ENCODE measurements at regions of chr6 and their contacts with region 1.

Region 1: DNA sequence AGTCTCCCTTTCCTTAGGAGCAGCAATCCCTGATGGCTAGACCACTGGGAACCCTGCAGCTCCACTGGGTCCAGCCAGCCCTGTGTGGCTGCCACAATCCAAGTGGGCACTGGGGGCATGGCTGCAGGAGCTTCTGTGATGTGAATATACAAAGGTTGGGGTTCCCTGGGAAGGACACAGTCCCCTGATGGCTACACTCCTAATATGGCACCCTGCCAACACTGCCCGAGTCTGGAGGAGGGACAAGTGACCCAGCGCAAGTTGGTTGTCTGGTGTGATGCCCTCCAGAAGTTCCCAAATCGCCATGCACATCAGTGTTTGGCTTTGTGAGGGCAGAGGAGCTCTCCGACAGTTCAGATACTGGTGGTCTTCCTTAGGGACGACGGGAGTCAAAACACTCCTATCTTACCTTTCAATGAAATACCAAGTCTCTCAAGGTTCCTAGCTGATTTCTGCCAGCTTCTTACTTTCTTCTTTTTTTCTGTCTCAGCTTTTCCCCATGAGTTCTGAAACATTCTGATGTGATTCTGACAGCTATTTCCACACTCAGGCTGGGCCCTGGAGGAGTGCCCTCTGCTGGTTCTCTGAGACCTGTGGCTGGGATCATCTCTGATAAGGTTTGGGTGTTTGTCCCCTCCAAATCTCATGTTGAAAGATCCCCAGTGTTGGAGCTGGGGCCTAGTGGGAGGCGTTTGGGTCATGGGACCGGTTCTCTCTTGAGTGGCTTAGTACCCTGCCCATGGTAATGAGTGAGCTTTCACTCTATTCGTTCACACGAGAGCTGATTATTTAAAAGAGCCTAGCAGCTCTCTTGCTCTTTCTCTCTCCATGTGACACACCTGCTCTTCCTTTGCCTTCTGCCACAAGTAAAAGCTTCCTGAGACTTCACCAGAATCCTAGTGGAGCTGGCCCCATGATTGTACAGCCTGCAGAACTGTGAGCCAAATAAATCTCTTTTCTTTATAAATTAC is 15.5 kb upstream of the ZFP57 start:
- DNase-seq: peak; percentile 47
- ATAC-seq: no peak
- H3K4me3 Mint-ChIP-seq: no peak overlapping the region
- H3K27ac Mint-ChIP-seq: no peak overlapping the region
- H3K4me1 Mint-ChIP-seq: no peaks in the 10 kb centered on the region
- H3K27me3 Mint-ChIP-seq: peaks cover 14% of the 10 kb centered on the region

Region 2: GRCh38 chr6:29559524-29560287 is 136.7 kb before region 1 on chr6 and contains the start of gene UBD:
- CTCF ChIA-PET with region 1: no interaction called
- DNase-seq: no peak
- ATAC-seq: no peak
- H3K4me3 Mint-ChIP-seq: no peak within 1 kb of the TSS
- H3K27ac Mint-ChIP-seq: no peak within 1 kb of the TSS
- H3K4me1 Mint-ChIP-seq: peaks cover 4% of the 10 kb centered on the region
- H3K27me3 Mint-ChIP-seq: peaks cover 60% of the 10 kb centered on the region
- total RNA-seq, gene UBD: 1.6 TPM in 1 of 2 experiments, not detected in the other

Region 3: DNA sequence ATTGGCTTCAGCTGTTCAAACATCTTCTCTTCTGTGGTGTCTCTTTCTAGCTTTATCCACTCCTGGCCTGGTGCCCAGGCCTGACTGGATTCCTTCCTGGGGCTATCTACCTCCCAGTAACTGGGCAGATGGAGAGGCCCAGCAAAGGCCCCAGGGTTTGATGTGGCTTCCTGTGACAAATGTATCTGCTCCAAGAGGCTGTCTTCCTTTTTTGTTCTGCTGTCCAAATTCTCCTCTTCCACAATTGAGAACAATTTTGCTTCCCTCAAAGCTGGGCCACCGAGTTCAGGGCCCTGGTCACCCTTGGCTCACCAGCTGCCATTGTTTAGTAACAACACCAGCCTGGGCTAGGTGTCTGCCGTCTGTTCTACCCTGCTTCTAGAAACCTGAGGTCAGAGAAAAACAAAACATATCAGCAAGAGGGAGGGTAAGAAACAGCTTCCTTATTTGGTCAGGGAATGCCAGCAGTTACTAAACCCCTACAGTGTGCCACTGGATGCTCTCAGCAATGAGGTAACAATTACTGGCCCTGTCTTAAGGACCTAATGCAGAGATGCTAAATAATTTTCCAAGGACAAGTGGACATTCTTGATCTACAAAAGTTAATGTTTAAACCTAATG is 19.3 kb before region 1 on chr6:
- CTCF ChIA-PET with region 1: interaction called, 10 read pairs
- DNase-seq: no peak
- ATAC-seq: no peak
- H3K4me3 Mint-ChIP-seq: no peak overlapping the region
- H3K27ac Mint-ChIP-seq: peak overlapping the region; percentile 49
- H3K4me1 Mint-ChIP-seq: peaks cover 40% of the 10 kb centered on the region
- H3K27me3 Mint-ChIP-seq: peaks cover 2% of the 10 kb centered on the region

Measured in activated CD8-positive, alpha-beta memory T cell treated with anti-CD3 and anti-CD28 coated beads, Interleukin-2, amount 10 ng/mL, durations not matched to agents 7 days and 5 days (primary cell).